PC-3 (cell line): ENCODE measurements at regions of chr9 and their contacts with region 1.

Region 1: DNA sequence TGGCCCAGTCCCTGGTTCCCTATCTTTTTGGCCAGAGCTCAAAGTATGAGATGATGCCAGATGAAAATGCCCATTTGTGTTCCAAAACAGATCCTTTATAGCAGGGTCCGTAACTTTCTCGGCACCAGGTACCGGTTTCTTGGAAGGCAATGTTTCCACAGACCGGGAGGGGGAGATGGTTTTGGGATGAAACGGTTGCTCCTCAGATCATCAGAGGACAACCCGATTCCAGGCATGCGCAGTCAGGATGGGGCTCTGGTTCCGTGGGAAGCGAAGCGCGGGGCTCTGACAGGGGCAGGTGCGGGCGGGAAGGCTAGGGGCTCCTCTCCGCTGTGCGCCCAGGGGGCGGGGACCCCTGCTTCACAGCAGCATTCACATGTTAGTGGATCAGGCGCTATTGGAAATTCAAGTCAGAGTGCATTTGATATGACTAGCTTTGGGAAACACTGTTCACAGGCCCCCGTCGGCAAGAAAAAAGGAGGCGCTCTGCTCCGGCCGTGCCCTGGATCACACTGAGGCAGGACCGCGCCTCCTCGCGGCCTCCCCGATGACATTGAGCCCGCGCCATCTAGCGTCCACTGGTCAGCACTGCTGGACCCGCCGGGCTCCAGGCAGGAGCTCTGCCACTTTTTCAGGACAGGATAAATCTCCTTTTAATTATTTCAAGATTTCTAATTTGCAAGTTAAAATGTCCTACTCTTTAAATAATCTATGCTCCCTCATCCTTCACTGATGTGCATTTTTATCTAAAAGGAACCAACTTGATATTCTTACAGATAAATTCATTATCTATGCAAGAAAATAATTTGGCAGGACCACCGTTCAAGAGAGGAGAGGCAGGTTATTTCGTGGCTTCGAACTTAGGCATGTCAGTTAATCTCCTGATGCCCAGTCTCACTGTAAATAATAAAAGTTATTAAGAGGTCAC is 190.0 kb downstream of the FANCC start:
- DNase-seq: peak; percentile 74
- ATAC-seq: peak; percentile 91
- H3K4me3 ChIP-seq: 0 out of 2 replicates have a peak overlapping the region, but pooled peaks have one; percentile 22
- H3K27ac ChIP-seq: no peak overlapping the region
- H3K4me1 ChIP-seq: no peaks in the 10 kb centered on the region
- H3K27me3 ChIP-seq: no peaks in the 10 kb centered on the region
- CTCF ChIP-seq: peak; percentile 92

Region 2: GRCh38 chr9:94563548-94563947 is 564.0 kb before region 1 on chr9:
- CTCF ChIA-PET with region 1: no interaction called
- POLR2A ChIA-PET with region 1: no interaction called
- intact Hi-C with region 1: no loop called
- DNase-seq: no peak
- ATAC-seq: no peak
- H3K4me3 ChIP-seq: no peak overlapping the region
- H3K27ac ChIP-seq: no peak overlapping the region
- H3K4me1 ChIP-seq: no peaks in the 10 kb centered on the region
- H3K27me3 ChIP-seq: no peaks in the 10 kb centered on the region
- CTCF ChIP-seq: peak; percentile 27; the same call in 1 of the 2 replicates

Region 3: GRCh38 chr9:94672811-94673487 is 454.6 kb before region 1 on chr9:
- CTCF ChIA-PET with region 1: interaction called, 16 read pairs
- POLR2A ChIA-PET with region 1: no interaction called
- intact Hi-C with region 1: no loop called
- DNase-seq: peak; percentile 79
- ATAC-seq: peak; percentile 72
- H3K4me3 ChIP-seq: no peak overlapping the region
- H3K27ac ChIP-seq: peak overlapping the region; percentile 53
- H3K4me1 ChIP-seq: peaks cover 17% of the 10 kb centered on the region
- H3K27me3 ChIP-seq: no peaks in the 10 kb centered on the region
- CTCF ChIP-seq: no peak

Region 4: DNA sequence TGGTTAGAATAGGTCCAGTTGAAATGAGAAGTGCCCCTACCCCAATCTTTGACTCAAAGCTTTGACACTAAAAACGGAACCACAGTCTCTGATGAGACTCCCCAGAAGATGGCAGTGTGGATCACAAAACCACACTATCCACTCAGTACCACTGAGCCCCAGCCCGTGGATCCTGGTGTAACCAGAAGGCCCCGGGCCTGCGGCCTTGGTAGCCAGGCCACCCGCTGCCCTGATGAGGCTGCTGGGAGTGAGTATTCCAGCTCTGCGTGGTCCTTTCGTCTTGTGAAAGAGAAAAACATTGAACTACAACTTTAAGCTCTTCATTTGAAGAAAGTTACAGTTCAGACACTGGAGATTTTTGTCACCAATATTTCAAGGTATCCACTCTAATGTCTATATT is 446.0 kb before region 1 on chr9:
- CTCF ChIA-PET with region 1: interaction called, 4 read pairs
- POLR2A ChIA-PET with region 1: no interaction called
- intact Hi-C with region 1: loop called (anchors 1 kb)
- DNase-seq: peak; percentile 68
- ATAC-seq: peak; percentile 99
- H3K4me3 ChIP-seq: no peak overlapping the region
- H3K27ac ChIP-seq: no peak overlapping the region
- H3K4me1 ChIP-seq: peaks cover 4% of the 10 kb centered on the region; the same call in 1 of the 2 replicates
- H3K27me3 ChIP-seq: no peaks in the 10 kb centered on the region
- CTCF ChIP-seq: peak; percentile 83

Region 5: DNA sequence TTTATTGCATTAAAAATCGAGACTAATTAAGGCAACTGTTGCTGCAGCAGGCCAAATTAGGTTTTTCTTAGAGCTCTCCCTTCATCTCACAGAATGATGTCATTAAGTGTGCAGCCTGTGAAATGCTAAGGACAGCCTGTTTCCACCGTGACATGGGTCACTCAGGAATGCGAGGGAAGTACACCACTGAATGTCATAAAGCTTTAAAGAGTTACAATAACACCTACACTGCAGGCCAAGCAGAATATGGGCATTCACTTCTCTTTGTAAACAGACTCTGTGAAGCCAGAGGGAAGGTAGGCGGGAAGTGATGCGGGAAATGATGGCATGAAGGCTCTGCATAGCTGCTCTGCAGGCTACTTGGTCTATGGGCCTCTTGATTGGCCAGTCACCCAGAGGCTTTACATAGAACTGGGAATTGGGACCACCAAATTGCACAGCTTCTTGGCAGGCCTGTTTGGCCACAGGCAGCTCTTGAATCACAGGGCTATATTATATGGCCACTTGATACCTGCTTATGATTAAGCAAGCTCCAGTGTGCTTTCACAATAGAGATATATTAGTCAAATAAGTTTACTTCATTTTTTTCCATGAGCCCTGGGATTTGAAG is 429.4 kb before region 1 on chr9:
- CTCF ChIA-PET with region 1: interaction called, 18 read pairs
- POLR2A ChIA-PET with region 1: no interaction called
- intact Hi-C with region 1: no loop called
- DNase-seq: no peak
- ATAC-seq: no peak
- H3K4me3 ChIP-seq: no peak overlapping the region
- H3K27ac ChIP-seq: no peak overlapping the region
- H3K4me1 ChIP-seq: no peaks in the 10 kb centered on the region
- H3K27me3 ChIP-seq: no peaks in the 10 kb centered on the region
- CTCF ChIP-seq: no peak